Sciatic nerve (tissue), 2 donors: ENCODE measurements at regions of chr2 and their contacts with region 1.

Region 1: GRCh38 chr2:112877423-112877822 is 33.5 kb upstream of the IL37 start:
- DNase-seq: no peak
- ATAC-seq: no peak

Region 2: GRCh38 chr2:112614201-112614840 is 263.1 kb before region 1 on chr2:
- intact Hi-C with region 1: loop called (anchors 10 kb)
- DNase-seq: peak; percentile 19
- ATAC-seq: no peak

Region 3: DNA sequence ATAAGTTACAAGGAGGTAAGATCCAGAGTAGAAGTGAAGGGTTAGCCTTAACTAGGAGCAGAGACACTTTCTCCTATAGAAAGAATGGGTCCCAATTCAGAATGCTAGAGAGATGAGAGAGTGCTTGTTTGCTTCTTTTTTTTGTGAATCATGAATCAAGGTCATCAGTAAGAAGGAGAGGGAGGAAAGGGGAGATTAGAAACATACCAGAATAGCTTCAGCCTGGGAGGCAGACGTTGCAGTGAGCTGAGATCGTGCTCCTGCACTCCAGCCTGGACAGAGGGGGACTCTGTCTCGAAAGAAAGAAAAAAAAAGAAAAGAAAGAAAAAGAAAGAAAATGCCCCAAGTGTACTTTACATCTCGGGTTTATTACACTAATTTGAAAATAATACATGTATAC is 934.8 kb after region 1 on chr2:
- intact Hi-C with region 1: no loop called
- DNase-seq: no peak
- ATAC-seq: no peak

Region 4: DNA sequence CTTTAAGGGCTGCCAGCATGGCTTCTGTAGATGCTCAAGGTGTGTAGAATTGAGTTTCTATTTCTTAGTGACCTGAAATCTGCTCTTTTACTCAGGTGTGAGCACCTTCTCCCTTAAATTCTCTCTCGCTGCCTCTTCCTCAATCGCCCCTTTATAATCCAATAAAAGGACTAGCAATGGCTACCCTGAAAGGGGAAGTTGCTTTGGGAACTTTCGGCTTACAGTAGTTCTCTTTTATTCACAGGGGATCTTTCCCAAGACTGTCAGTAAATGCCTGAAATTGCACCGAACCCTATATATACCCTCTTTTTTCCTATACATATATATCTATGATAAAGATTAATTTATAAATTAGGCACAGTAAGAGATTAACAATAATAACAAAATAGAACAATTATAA is 1134.3 kb after region 1 on chr2:
- intact Hi-C with region 1: no loop called
- DNase-seq: no peak
- ATAC-seq: no peak